ENCODE measurements at regions of chr5 and their contacts with region 1.

Region 1: GRCh38 chr5:173933901-173934300 is 45.8 kb downstream of the CPEB4 start:
- DNase-seq: no peak
- H3K4me3 Mint-ChIP-seq: no peak overlapping the region
- H3K27ac Mint-ChIP-seq: no peak overlapping the region
- H3K4me1 Mint-ChIP-seq: no peaks in the 10 kb centered on the region
- H3K27me3 Mint-ChIP-seq: no peaks in the 10 kb centered on the region

Region 2: DNA sequence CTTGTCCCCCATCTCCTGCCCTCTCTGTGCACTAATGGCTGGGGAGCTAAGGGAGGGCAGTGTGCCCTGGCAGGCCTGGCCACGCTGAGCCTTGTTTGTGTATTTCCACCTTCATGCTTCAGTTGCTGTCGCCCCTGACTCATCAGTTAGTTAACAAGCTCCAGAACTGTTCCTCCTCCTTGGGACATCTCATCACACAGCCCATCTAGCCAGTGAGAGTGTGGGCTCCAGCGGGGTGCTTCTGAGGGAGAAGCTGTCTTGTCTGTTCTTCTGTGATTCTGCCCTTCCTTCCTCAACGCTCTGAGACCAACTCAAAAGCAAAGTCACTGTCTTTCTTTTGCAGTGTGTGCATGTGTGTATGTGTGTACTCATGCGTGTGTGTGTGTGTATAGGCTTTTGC is 104.1 kb before region 1 on chr5:
- intact Hi-C with region 1: no loop called
- DNase-seq: no peak
- H3K4me3 Mint-ChIP-seq: no peak overlapping the region
- H3K27ac Mint-ChIP-seq: no peak overlapping the region
- H3K4me1 Mint-ChIP-seq: no peaks in the 10 kb centered on the region
- H3K27me3 Mint-ChIP-seq: peaks cover 2% of the 10 kb centered on the region

Region 3: DNA sequence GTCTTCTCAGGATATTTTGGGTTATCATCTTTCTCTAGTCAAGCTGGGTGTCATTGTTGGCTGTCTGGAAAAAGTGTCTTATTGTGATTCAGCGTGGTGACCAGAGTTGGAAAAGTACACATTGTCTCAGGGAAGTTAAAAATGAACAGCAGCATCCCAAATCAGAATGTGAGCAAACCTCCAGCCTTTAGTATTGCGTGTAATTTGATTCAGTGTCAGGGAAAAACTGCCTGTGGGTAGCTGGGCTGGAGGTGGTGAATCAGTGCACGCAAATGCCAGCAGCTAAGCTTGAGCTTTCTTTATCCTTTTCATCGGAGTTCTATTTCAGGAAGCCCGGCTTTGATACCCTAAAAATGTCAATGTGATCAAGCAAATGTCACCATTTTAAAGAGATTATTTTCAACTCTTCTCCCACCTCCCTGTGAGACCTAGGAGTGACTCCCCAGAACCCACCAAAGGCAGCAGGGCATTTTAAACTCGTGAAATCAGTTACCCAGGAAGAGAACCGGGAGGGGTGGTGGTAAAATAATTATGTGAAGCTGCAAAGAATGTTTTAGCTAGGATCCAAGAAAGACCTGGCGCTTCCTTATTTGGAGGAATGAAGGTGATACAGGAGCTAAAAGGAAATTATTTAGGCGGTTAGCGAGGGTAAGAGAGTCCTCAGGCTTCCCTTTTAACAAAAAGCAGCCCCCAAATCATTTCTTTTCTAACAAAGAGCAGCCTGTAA is 29.4 kb after region 1 on chr5:
- intact Hi-C with region 1: loop called (anchors 1 kb)
- DNase-seq: no peak
- H3K4me3 Mint-ChIP-seq: no peak overlapping the region
- H3K27ac Mint-ChIP-seq: no peak overlapping the region
- H3K4me1 Mint-ChIP-seq: no peaks in the 10 kb centered on the region
- H3K27me3 Mint-ChIP-seq: no peaks in the 10 kb centered on the region

Region 4: DNA sequence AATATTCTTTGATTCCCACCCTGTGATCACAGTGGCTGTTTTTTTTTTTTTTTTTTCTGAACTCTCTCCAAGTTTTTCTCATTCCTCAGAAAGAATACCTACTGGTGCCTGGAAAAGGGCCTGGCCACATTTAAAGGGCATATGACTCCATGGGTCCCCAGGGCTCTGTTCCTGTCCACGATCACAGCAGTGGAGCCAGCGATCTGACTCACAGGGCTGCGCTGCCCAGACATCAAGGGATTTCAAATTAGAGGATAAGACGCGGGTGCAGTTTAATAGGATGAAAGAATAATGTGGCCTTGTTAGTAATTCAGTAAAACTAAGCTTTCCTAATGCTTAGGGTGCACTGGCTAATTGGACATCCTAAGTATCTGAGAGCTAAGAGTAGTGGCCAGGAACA is 615.4 kb after region 1 on chr5:
- intact Hi-C with region 1: no loop called
- DNase-seq: no peak
- H3K4me3 Mint-ChIP-seq: no peak overlapping the region
- H3K27ac Mint-ChIP-seq: no peak overlapping the region
- H3K4me1 Mint-ChIP-seq: no peaks in the 10 kb centered on the region
- H3K27me3 Mint-ChIP-seq: no peaks in the 10 kb centered on the region

Measured in activated T-helper 1 cell treated with anti-CD3 and anti-CD28 coated beads, Interleukin-12 subunit alpha, Interleukin-12 subunit beta, Interleukin-2, Interleukin-4 antibody, amounts not matched to agents 30 ng/mL and 10 ng/mL and 1 ng/mL, durations not matched to agents 14 hours and 24 hours and 36 hours (primary cell).